Activated B cell treated with CpG ODN at 0.5 μM for 24 hours (primary cell): ENCODE measurements at regions of chr19 and their contacts with region 1.

Region 1: DNA sequence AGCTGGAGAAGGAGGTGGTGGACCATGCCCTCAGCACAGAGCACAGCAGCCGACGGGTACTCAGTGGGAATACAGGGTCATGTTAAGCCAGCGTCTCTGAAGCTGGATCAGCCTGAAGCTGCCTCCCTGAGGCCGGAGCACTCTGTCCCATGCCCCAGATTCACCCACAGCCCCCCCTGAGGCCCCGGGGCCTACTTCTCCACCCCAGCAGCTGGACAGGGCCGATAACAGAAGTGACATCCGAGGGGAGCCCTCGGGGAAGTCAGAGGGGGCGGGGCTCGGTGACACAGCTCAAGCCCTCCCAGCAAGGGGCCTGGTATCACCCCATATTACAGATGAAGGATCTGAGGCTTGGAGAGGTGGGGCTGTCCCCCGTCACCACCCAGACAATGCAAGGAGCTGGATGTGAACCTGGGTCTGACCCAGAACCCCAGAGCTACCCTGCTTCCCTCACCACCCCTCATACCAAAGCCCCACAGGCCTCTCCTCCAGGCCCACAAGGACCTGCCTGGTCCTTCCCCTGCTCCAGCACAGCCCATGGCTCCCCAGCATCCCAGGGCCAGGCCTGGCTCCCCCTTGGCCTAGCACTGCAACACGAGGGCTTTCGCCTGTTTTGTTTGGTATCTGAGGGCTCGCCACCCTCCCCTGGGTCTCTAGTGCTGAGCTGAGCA is 5.7 kb downstream of the R3HDM4 start:
- DNase-seq: peak; percentile 70
- ATAC-seq: peak; percentile 49
- H3K4me3 Mint-ChIP-seq: peak overlapping the region; percentile 80
- H3K27ac Mint-ChIP-seq: peak overlapping the region; percentile 99
- H3K4me1 Mint-ChIP-seq: peaks cover 73% of the 10 kb centered on the region
- H3K27me3 Mint-ChIP-seq: no peaks in the 10 kb centered on the region
- CTCF ChIP-seq: no peak

Region 2: GRCh38 chr19:336032-336614 is 571.2 kb before region 1 on chr19:
- CTCF ChIA-PET with region 1: no interaction called
- POLR2A ChIA-PET with region 1: no interaction called
- intact Hi-C with region 1: no loop called
- DNase-seq: no peak
- ATAC-seq: no peak
- H3K4me3 Mint-ChIP-seq: no peak overlapping the region
- H3K27ac Mint-ChIP-seq: no peak overlapping the region
- H3K4me1 Mint-ChIP-seq: peaks cover 16% of the 10 kb centered on the region
- H3K27me3 Mint-ChIP-seq: no peaks in the 10 kb centered on the region
- CTCF ChIP-seq: no peak

Region 3: GRCh38 chr19:680287-681028 is 226.9 kb before region 1 on chr19:
- CTCF ChIA-PET with region 1: no interaction called
- POLR2A ChIA-PET with region 1: interaction called, 3 read pairs
- intact Hi-C with region 1: loop called (anchors 5 kb)
- DNase-seq: peak; percentile 95
- ATAC-seq: peak; percentile 80
- H3K4me3 Mint-ChIP-seq: peak overlapping the region; percentile 95
- H3K27ac Mint-ChIP-seq: peak overlapping the region; percentile 98
- H3K4me1 Mint-ChIP-seq: peaks cover 14% of the 10 kb centered on the region
- H3K27me3 Mint-ChIP-seq: peaks cover 4% of the 10 kb centered on the region
- CTCF ChIP-seq: no peak

Region 4: GRCh38 chr19:892243-893050 is 14.9 kb before region 1 on chr19:
- CTCF ChIA-PET with region 1: interaction called, 6 read pairs
- POLR2A ChIA-PET with region 1: interaction called, 213 read pairs
- intact Hi-C with region 1: loop called (anchors 1 kb)
- DNase-seq: no peak
- ATAC-seq: peak; percentile 57
- H3K4me3 Mint-ChIP-seq: peak overlapping the region; percentile 91
- H3K27ac Mint-ChIP-seq: peak overlapping the region; percentile 99
- H3K4me1 Mint-ChIP-seq: peaks cover 21% of the 10 kb centered on the region
- H3K27me3 Mint-ChIP-seq: no peaks in the 10 kb centered on the region
- CTCF ChIP-seq: no peak

Region 5: GRCh38 chr19:920051-920864 is 12.9 kb after region 1 on chr19:
- CTCF ChIA-PET with region 1: interaction called, 7 read pairs
- POLR2A ChIA-PET with region 1: interaction called, 15 read pairs
- intact Hi-C with region 1: loop called (anchors 1 kb)
- DNase-seq: peak; percentile 70
- ATAC-seq: peak; percentile 38
- H3K4me3 Mint-ChIP-seq: peak overlapping the region; percentile 72
- H3K27ac Mint-ChIP-seq: no peak overlapping the region
- H3K4me1 Mint-ChIP-seq: peaks cover 34% of the 10 kb centered on the region
- H3K27me3 Mint-ChIP-seq: no peaks in the 10 kb centered on the region
- CTCF ChIP-seq: no peak

Region 6: DNA sequence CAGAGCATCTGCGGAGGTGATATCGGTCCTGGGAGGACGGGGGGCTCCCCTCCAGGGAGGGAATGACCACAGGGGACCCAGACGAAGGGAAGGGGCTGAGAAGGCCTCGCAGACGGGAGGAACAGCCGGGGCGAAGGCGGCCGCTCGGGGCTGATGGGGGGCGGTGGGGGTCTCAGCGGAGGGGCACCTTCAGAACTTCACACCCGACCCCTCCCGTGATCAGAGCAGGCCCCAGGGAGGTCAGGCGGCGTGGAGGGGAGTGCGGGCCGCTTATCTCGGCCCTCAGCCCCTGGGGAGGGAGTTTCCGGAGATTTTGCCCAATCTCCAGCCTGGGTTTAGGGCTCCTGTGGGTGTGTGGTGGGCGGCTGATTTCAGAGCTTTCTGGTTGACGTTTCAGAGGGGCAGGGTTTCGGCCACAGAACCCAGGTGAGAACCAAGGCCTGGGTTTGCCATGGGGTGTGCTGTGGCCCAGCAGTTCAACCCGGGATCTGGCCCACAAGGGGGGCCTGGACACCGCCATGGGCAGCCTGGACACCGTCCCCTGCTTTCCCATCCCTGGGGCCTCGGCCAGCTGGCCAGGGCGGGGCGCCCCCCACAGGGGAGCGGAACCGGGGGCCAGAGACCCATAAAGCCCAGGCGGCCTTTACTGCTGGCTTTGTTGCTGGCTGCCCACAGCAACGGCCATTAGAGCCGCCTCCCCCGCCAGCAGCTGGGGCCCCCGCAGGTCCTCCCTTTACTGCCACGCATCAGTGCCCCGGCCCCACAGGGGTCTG is 47.5 kb after region 1 on chr19:
- CTCF ChIA-PET with region 1: no interaction called
- POLR2A ChIA-PET with region 1: interaction called, 12 read pairs
- intact Hi-C with region 1: no loop called
- DNase-seq: no peak
- ATAC-seq: peak; percentile 58
- H3K4me3 Mint-ChIP-seq: peak overlapping the region; percentile 35
- H3K27ac Mint-ChIP-seq: peak overlapping the region; percentile 59
- H3K4me1 Mint-ChIP-seq: peaks cover 45% of the 10 kb centered on the region
- H3K27me3 Mint-ChIP-seq: no peaks in the 10 kb centered on the region
- CTCF ChIP-seq: no peak

Region 7: DNA sequence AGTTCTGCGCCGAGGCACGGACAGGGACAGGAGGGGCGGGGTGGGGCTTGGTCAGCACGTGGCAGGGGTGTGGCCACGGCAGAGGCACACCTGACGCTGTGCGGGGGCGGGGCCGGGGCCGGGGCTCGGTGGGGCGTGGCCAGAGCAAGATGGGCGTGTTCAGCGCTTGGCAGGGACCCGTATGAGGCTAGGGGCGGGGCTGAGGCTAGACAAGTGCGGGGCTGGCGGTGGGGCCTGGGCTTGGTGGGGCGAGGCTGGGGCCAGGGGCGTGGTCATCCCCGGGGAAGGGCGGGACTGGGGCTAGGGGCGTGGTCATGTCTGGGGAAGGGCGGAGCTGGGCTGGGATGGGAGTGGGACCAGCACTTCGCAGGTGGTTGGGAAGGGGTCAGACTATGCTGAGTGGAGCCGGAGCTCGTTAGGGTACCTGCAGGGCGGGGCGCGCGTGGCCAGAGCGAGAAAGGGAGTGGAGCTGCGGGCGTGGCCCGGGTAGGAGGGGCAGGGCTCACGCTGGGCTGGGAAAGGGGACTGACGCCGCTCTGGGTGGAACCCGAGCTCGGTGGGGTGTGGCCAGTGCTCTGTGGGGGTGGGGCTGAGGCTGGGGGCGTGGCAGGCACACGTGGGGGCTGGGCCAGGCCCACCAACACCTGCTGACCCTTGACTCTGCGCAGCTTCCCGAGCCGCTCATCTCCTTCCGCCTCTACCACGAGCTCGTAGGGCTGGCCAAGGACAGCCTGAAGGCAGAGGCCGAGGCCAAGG is 175.0 kb after region 1 on chr19:
- CTCF ChIA-PET with region 1: no interaction called
- POLR2A ChIA-PET with region 1: no interaction called
- intact Hi-C with region 1: no loop called
- DNase-seq: no peak
- ATAC-seq: peak; percentile 63
- H3K4me3 Mint-ChIP-seq: no peak overlapping the region
- H3K27ac Mint-ChIP-seq: peak overlapping the region; percentile 65
- H3K4me1 Mint-ChIP-seq: peaks cover 52% of the 10 kb centered on the region
- H3K27me3 Mint-ChIP-seq: no peaks in the 10 kb centered on the region
- CTCF ChIP-seq: no peak

Region 8: GRCh38 chr19:1260636-1261537 is 353.6 kb after region 1 on chr19:
- CTCF ChIA-PET with region 1: no interaction called
- POLR2A ChIA-PET with region 1: interaction called, 4 read pairs
- intact Hi-C with region 1: loop called (anchors 5 kb)
- DNase-seq: peak; percentile 95
- ATAC-seq: peak; percentile 63
- H3K4me3 Mint-ChIP-seq: peak overlapping the region; percentile 91
- H3K27ac Mint-ChIP-seq: peak overlapping the region; percentile 98
- H3K4me1 Mint-ChIP-seq: peaks cover 82% of the 10 kb centered on the region
- H3K27me3 Mint-ChIP-seq: no peaks in the 10 kb centered on the region
- CTCF ChIP-seq: no peak